ENCODE measurements at regions of chr3 and their contacts with region 1.

Region 1: GRCh38 chr3:187714404-187714979 is 12.1 kb upstream of the RTP2 start:
- DNase-seq: peak in 1 of 2 donors; percentile 80
- ATAC-seq: peak; percentile 76 to 94 (median 86)
- H3K4me3 ChIP-seq: no peak overlapping the region
- H3K27ac ChIP-seq: no peak overlapping the region
- H3K4me1 ChIP-seq: peaks cover 0 to 12% (median 3%) of the 10 kb centered on the region in 9 donors
- H3K27me3 ChIP-seq: no peaks in the 10 kb centered on the region
- CTCF ChIP-seq: peak; percentile 93 to 97 (median 94)

Region 2: GRCh38 chr3:187210545-187211327 is 503.8 kb before region 1 on chr3:
- intact Hi-C with region 1: loop called in 1 of 10 experiments (anchors 10 kb)
- DNase-seq: peak in 1 of 2 donors; percentile 18
- ATAC-seq: peak in 7 of 8 donors; percentile 9 to 47 (median 37)
- H3K4me3 ChIP-seq: no peak overlapping the region
- H3K27ac ChIP-seq: peak overlapping the region in 3 of 10 donors; percentile 42 to 79 (median 53)
- H3K4me1 ChIP-seq: peaks cover 5 to 45% (median 27%) of the 10 kb centered on the region in 9 donors
- H3K27me3 ChIP-seq: no peaks in the 10 kb centered on the region
- CTCF ChIP-seq: no peak

Region 3: DNA sequence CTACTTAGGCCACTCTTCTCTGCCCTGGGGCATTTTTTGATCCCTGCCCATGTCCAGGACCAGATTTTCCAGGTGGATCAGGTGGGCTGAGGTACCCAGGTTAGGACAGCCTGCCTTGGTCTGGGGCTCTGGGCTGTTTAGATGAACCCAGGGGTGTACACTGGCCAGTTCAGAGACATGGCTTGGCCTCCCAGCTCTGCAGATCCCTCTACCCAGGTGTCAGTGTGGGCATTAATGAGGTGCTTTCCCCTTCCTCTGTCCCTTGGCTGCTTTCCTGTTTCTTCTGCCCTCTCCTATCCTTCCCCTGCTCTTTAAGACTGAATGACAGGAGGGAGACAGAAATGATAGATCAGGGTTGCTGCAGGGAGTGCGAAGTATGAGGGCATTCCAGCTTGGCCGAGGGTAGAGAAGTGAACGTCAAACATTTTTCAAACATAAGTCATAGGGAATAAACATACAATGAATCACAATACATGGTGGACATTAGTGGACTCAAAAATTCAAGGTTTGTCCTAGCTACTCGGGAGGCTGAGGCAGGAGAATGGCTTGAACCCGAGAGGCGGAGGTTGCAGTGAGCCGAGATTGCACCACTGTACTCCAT is 486.7 kb before region 1 on chr3:
- intact Hi-C with region 1: loop called in 2 of 10 experiments (anchors 10 kb)
- DNase-seq: no peak
- ATAC-seq: no peak
- H3K4me3 ChIP-seq: no peak overlapping the region
- H3K27ac ChIP-seq: no peak overlapping the region
- H3K4me1 ChIP-seq: no peaks in the 10 kb centered on the region
- H3K27me3 ChIP-seq: no peaks in the 10 kb centered on the region
- CTCF ChIP-seq: no peak

Region 4: GRCh38 chr3:187616307-187616972 is 98.1 kb before region 1 on chr3:
- intact Hi-C with region 1: loop called in 5 of 10 experiments (anchors 10 kb)
- DNase-seq: peak in 1 of 2 donors; percentile 34
- ATAC-seq: peak in 1 of 8 donors; percentile 23
- H3K4me3 ChIP-seq: no peak overlapping the region
- H3K27ac ChIP-seq: no peak overlapping the region
- H3K4me1 ChIP-seq: peaks cover 0 to 3% (median 0%) of the 10 kb centered on the region in 9 donors
- H3K27me3 ChIP-seq: peaks cover 0 to 6% (median 0%) of the 10 kb centered on the region in 7 donors
- CTCF ChIP-seq: peak; percentile 26 to 75 (median 68)

Region 5: GRCh38 chr3:187679638-187680396 is 34.7 kb before region 1 on chr3:
- intact Hi-C with region 1: loop called in 2 of 10 experiments (anchors 2 kb)
- DNase-seq: peak; percentile 73 to 78
- ATAC-seq: peak; percentile 86 to 95 (median 92)
- H3K4me3 ChIP-seq: no peak overlapping the region
- H3K27ac ChIP-seq: no peak overlapping the region
- H3K4me1 ChIP-seq: peaks cover 0 to 12% (median 6%) of the 10 kb centered on the region in 9 donors
- H3K27me3 ChIP-seq: peaks cover 0 to 20% (median 3%) of the 10 kb centered on the region in 7 donors
- CTCF ChIP-seq: peak; percentile 81 to 94 (median 92)

Region 6: GRCh38 chr3:187799942-187800641 is 85.6 kb after region 1 on chr3:
- intact Hi-C with region 1: no loop called
- DNase-seq: no peak
- ATAC-seq: no peak
- H3K4me3 ChIP-seq: no peak overlapping the region
- H3K27ac ChIP-seq: peak overlapping the region in 1 of 10 donors; percentile 66
- H3K4me1 ChIP-seq: peaks cover 0 to 33% (median 0%) of the 10 kb centered on the region in 9 donors
- H3K27me3 ChIP-seq: peaks cover 0 to 4% (median 0%) of the 10 kb centered on the region in 7 donors
- CTCF ChIP-seq: no peak